Activated CD8-positive, alpha-beta T cell treated with anti-CD3 and anti-CD28 coated beads, Interleukin-2, amount 10 ng/mL, durations not matched to agents 7 days and 5 days (primary cell): ENCODE measurements at regions of chr2 and their contacts with region 1.

Region 1: DNA sequence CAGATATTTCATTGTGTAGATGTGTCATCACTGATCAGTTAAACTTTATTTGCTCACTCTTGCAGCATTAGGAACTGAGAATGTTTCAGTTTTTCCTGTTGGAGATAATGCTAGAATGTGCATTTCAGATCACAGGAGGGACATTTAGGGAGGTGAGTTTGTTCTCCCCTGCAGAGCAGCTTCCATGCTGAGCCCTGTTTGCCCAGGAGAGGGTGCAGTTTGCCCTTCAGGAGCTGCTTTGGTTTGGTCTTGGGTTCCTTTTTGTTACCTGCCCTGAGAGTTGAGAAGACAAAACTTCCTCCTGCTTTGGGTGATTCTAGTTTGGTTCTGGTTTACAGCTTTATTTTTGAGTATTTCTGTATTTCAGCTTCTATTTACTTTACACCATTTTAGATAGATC is 49.9 kb downstream of the DGKD start:
- DNase-seq: peak; percentile 77
- ATAC-seq: peak; percentile 40
- H3K4me3 Mint-ChIP-seq: no peak overlapping the region
- H3K27ac Mint-ChIP-seq: peak overlapping the region; percentile 31
- H3K4me1 Mint-ChIP-seq: peaks cover 68% of the 10 kb centered on the region
- H3K27me3 Mint-ChIP-seq: no peaks in the 10 kb centered on the region

Region 2: DNA sequence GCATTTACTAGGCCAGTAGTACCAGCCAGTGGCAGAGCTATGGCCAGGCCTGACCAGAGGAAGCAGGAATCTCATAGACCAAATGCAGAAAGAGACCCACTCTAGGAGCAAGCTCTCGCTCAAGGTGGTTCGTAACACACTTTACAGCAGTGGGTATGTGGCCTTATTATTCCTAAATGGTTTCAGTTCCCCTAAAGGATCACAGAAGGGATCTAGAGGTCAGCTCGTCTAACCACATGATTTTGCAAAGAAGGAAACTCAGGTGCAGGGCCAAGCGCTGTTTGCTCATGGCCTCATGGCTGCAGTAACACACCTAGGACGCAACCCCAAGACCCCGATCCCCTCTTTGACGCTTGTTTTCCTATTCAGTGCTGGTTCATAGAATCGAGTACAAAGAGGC is 218.3 kb before region 1 on chr2:
- CTCF ChIA-PET with region 1: no interaction called
- POLR2A ChIA-PET with region 1: no interaction called
- DNase-seq: no peak
- ATAC-seq: no peak
- H3K4me3 Mint-ChIP-seq: no peak overlapping the region
- H3K27ac Mint-ChIP-seq: peak overlapping the region; percentile 69
- H3K4me1 Mint-ChIP-seq: peaks cover 4% of the 10 kb centered on the region
- H3K27me3 Mint-ChIP-seq: no peaks in the 10 kb centered on the region

Region 3: DNA sequence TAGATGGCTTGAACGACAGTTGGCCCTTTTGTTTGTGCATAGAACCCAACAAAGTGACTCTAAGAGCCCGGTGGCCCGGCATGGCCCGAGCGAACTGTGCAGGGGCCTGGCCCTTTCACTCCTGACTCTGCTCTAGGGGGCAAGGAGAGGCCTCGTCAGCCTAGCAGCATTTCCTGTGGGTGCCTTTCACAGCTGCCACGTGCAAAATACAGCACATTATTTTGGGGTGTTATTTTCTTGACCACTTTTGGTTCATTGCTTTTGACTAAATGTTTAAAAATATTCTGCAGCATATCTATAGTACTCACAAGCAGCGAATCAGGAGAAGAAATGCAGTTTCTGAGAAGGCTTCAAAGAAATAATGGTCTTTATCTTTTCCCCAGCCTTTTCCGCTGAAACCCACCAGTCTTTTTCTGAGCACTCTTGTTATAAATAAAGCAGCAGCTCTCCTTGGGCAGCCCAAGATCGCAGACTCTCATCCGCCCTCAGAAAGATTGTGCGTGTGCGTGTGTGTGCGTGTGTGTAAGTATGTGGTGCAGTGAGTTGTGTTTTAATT is 18.7 kb before region 1 on chr2:
- CTCF ChIA-PET with region 1: interaction called, 20 read pairs
- POLR2A ChIA-PET with region 1: interaction called, 5 read pairs
- DNase-seq: peak; percentile 77
- ATAC-seq: peak; percentile 87
- H3K4me3 Mint-ChIP-seq: peak overlapping the region; percentile 66
- H3K27ac Mint-ChIP-seq: peak overlapping the region; percentile 97
- H3K4me1 Mint-ChIP-seq: peaks cover 87% of the 10 kb centered on the region
- H3K27me3 Mint-ChIP-seq: no peaks in the 10 kb centered on the region

Region 4: GRCh38 chr2:233418761-233419625 is 14.8 kb after region 1 on chr2:
- CTCF ChIA-PET with region 1: interaction called, 180 read pairs
- POLR2A ChIA-PET with region 1: interaction called, 13 read pairs
- DNase-seq: peak; percentile 64
- ATAC-seq: peak; percentile 48
- H3K4me3 Mint-ChIP-seq: peak overlapping the region; percentile 67
- H3K27ac Mint-ChIP-seq: peak overlapping the region; percentile 92
- H3K4me1 Mint-ChIP-seq: peaks cover 97% of the 10 kb centered on the region
- H3K27me3 Mint-ChIP-seq: no peaks in the 10 kb centered on the region

Region 5: GRCh38 chr2:233426619-233427342 is 22.6 kb after region 1 on chr2:
- CTCF ChIA-PET with region 1: interaction called, 180 read pairs
- POLR2A ChIA-PET with region 1: interaction called, 9 read pairs
- DNase-seq: no peak
- ATAC-seq: no peak
- H3K4me3 Mint-ChIP-seq: no peak overlapping the region
- H3K27ac Mint-ChIP-seq: peak overlapping the region; percentile 3
- H3K4me1 Mint-ChIP-seq: peaks cover 82% of the 10 kb centered on the region
- H3K27me3 Mint-ChIP-seq: no peaks in the 10 kb centered on the region